ENCODE measurements at regions of chr3 and their contacts with region 1.

Region 1: GRCh38 chr3:71875461-71875947 is 90.6 kb upstream of the PROK2 start:
- DNase-seq: peak; percentile 86
- ATAC-seq: peak; percentile 96
- H3K4me3 Mint-ChIP-seq: no peak overlapping the region
- H3K27ac Mint-ChIP-seq: no peak overlapping the region
- H3K4me1 Mint-ChIP-seq: peaks cover 23% of the 10 kb centered on the region
- H3K27me3 Mint-ChIP-seq: peaks cover 6% of the 10 kb centered on the region

Region 2: DNA sequence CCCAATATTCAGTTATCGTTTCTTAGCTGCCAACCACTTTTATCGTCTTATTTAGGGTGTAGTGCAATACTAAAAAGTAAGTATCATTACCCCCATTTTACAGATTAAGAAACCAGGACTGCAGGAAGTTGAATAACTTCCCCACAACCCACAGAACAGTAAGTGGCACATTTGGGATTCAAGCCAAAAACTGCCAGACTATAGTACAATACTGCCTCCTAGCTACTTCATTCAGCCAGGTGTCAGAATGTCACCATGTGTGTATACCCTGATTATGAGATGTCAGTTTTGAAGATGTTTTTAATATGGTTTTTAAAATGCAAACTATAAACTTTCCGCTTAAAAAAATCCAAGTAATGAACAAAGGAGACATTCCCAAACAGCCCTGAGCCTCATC is 16.4 kb before region 1 on chr3:
- CTCF ChIA-PET with region 1: interaction called, 11 read pairs
- DNase-seq: no peak
- ATAC-seq: peak; percentile 80
- H3K4me3 Mint-ChIP-seq: no peak overlapping the region
- H3K27ac Mint-ChIP-seq: no peak overlapping the region
- H3K4me1 Mint-ChIP-seq: peaks cover 15% of the 10 kb centered on the region
- H3K27me3 Mint-ChIP-seq: peaks cover 26% of the 10 kb centered on the region

Region 3: DNA sequence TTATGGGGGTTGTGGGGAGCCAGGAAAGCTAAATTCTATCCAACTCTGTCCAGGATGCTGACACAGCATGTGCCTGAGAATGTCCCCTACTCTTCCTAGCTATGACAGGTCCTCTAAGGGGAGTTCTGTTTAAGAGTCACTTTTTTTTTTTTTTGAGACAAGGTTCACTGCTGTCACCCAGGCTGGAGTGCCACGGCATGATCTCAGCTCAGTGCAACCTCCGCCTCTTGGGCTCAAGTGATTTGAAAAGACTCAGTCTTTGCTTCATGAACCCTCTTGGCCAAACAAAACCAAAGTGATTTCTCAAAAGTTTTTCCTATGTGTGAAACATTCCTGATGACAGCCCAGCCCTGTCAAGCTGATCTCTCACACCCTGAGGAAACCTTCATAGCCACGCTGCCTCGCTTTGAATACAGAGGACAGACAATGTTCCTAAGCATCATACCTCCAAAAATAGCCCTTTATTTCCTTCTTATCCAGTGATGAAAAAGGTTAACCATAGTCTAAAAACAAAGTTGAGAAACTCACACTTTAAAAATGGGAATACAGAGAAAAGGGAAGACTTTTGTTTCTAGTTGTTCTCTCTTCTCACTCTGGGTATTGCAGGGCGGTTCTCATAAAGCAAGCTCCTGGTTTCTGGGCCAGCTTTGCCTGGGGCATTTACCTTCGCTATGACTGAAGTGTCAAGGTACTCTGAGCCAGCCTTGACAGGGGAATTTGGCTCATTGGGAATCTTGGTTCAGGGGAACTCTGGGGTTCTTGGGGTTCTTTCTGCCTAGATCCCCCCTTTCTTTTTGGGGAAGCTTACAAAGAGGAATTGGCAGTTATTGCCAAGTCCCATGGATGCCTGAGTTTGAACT is 15.1 kb after region 1 on chr3:
- CTCF ChIA-PET with region 1: interaction called, 16 read pairs
- DNase-seq: no peak
- ATAC-seq: no peak
- H3K4me3 Mint-ChIP-seq: no peak overlapping the region
- H3K27ac Mint-ChIP-seq: no peak overlapping the region
- H3K4me1 Mint-ChIP-seq: no peaks in the 10 kb centered on the region
- H3K27me3 Mint-ChIP-seq: peaks cover 30% of the 10 kb centered on the region